CD14-positive monocyte (primary cell): ENCODE measurements at regions of chr3 and their contacts with region 1.

Region 1: DNA sequence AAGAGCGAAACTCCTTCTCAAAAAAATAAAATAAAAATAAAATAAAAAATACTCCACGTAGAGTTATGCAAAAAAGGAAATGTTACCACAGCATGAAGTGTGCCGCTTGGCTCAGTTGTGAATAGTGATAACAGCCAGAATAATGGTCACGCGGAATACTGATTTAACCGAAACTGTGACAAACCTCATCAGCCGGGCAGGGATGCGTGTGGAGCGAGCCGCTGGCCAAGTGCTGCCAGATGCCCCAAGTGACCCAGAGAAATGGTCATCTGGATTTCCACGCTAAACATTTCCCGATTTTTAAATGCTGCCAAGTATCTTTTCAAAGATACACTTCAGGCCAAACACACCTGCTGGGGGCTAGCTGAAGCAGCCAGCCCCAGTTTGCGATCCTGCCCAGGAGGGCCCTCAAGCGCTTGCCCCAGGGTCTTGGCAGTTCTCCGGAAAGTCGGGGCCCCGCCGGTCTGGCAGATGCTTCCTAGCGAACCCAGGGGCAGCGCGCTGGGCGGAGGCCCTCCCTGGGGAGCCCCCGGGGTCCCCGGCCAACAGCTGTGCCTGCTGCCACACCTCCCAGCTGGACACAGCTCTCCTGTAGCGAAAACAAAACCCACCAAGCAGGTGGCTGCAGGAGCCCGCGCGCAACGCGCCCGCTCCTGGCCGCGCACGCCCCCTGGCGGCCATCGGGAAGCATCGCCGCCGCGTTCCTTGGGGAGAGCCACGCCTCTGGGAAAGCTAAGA is 35.1 kb downstream of the CMTM6 start:
- DNase-seq: peak; percentile 55 to 65 (median 59)
- H3K4me3 ChIP-seq: peak overlapping the region; percentile 33 to 79 (median 50)
- H3K4me3 Mint-ChIP-seq: peak overlapping the region; percentile 69 to 79
- H3K27ac ChIP-seq: no peak overlapping the region
- H3K27ac Mint-ChIP-seq: peak overlapping the region in 4 of 7 donors; percentile 3 to 44 (median 24)
- H3K4me1 ChIP-seq: peaks cover 24 to 28% of the 10 kb centered on the region in 2 donors
- H3K4me1 Mint-ChIP-seq: peaks cover 46% of the 10 kb centered on the region
- H3K27me3 ChIP-seq: no peaks in the 10 kb centered on the region
- H3K27me3 Mint-ChIP-seq: peaks cover 0 to 1% (median 0%) of the 10 kb centered on the region in 3 donors
- CTCF ChIP-seq: peak; percentile 99

Region 2: DNA sequence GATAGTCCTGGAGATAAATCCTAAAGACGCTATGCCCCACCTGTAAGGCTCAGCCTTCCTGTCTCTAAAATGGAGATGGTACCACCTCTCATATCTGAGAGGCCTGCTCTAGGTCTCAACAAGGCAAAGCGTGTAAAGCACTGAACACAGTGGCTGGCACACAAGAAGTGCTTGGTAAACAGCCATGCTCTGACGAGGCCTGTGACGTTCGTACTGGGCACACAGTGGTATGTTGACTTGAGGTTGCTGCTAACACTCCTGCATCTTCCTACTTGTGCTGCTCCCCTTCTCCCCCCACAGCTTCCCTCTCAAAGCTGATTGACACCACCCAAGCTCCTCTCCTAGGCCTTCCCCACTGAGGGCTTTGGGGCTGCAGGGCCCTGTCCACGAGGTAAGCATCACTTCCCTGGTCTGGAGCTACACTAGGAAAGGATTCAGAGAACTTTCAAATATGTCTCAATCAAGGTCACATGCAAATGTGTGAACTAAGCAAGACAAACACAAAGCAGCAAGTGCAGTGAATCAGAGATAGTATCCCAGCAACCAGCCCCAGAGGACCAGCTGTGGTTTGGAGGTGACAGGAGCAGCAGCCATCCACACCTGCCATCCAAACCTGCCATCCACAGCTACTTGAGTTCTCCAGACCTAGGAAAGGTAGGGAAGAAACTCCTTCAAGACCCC is 757.2 kb before region 1 on chr3:
- intact Hi-C with region 1: no loop called
- DNase-seq: peak in 1 of 3 donors; percentile 11
- H3K4me3 ChIP-seq: no peak overlapping the region
- H3K4me3 Mint-ChIP-seq: no peak overlapping the region
- H3K27ac ChIP-seq: no peak overlapping the region
- H3K27ac Mint-ChIP-seq: no peak overlapping the region
- H3K4me1 ChIP-seq: peaks cover 16 to 17% of the 10 kb centered on the region in 2 donors
- H3K4me1 Mint-ChIP-seq: peaks cover 22% of the 10 kb centered on the region
- H3K27me3 ChIP-seq: no peaks in the 10 kb centered on the region
- H3K27me3 Mint-ChIP-seq: peaks cover 0 to 2% (median 0%) of the 10 kb centered on the region in 3 donors
- CTCF ChIP-seq: no peak

Region 3: DNA sequence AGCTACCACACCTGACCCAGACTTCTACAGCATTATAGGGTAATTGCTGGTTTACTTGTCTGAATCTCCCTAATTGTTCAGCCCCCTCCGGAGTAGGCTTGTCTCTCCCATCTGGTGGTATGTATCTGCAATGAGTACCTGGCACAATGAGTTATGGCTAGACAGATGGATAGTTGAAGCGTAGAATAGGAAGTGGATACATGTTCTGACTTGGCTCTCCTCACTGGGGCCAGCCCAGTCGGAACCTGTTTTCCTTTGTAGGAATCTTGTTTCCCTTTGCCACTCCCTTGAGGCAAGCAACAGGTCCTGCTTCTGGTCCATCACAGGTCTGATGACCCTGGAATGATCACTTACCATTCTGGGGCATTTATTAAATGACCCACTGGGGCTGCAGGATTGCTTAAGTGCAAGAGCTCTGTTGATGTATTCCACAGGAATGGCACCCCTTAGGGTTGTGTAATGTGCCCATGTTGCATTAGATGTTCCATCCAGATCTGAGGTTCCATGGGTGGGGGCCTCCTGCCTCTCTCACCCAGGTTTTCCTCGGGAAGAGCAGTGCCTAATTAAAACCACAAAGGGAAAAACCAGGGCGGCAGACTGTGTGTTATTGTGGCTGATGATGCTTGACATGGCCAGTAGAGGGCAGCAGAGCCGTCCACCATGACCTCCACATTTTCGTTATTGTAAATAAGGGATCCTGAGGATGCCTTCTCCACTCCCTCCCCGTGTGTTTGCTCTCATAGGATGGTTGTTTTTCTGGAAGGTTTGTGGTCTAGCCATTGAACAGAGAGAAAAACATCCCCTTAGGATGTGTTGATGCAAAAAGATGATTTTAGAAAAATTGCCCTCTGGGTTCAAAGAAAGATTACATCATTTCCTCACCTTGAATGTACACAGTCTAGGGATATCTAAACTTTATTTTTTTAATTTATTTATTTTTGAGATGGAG is 171.0 kb before region 1 on chr3:
- intact Hi-C with region 1: loop called in 1 of 2 experiments (anchors 5 kb)
- DNase-seq: peak; percentile 44 to 62 (median 58)
- H3K4me3 ChIP-seq: no peak overlapping the region
- H3K4me3 Mint-ChIP-seq: no peak overlapping the region
- H3K27ac ChIP-seq: no peak overlapping the region
- H3K27ac Mint-ChIP-seq: peak overlapping the region in 1 of 7 donors; percentile 68
- H3K4me1 ChIP-seq: no peaks in the 10 kb centered on the region
- H3K4me1 Mint-ChIP-seq: peaks cover 2% of the 10 kb centered on the region
- H3K27me3 ChIP-seq: no peaks in the 10 kb centered on the region
- H3K27me3 Mint-ChIP-seq: peaks cover 0 to 5% (median 3%) of the 10 kb centered on the region in 3 donors
- CTCF ChIP-seq: peak; percentile 90

Region 4: DNA sequence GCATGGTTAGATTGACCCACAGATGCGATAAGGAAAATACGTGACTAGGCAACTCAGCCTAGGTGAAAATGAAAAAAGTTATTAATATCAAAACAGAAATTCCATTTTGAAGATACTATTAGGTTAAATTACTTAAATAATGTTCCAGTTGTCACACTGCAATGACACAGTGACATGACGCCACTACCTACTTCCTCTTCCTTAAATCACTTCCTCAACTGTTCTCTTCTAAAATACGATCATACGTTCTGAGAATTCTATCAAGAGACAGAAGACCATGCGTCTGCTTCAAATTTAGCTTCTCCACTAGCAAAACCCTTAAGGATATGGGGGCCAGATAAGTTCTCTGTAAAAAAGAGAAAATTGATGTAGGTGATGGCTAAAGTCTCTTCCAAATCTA is 16.9 kb after region 1 on chr3:
- intact Hi-C with region 1: no loop called
- DNase-seq: peak; percentile 87 to 93 (median 92)
- H3K4me3 ChIP-seq: peak overlapping the region in 2 of 3 experiments; percentile 16 to 66
- H3K4me3 Mint-ChIP-seq: peak overlapping the region; percentile 31 to 87
- H3K27ac ChIP-seq: peak overlapping the region; percentile 78 to 94
- H3K27ac Mint-ChIP-seq: peak overlapping the region; percentile 87 to 99 (median 96)
- H3K4me1 ChIP-seq: peaks cover 19 to 32% of the 10 kb centered on the region in 2 donors
- H3K4me1 Mint-ChIP-seq: peaks cover 41% of the 10 kb centered on the region
- H3K27me3 ChIP-seq: no peaks in the 10 kb centered on the region
- H3K27me3 Mint-ChIP-seq: no peaks in the 10 kb centered on the region
- CTCF ChIP-seq: no peak